Esophagus muscularis mucosa (tissue), 4 donors: ENCODE measurements at regions of chr17 and their contacts with region 1.

Region 1: GRCh38 chr17:76121932-76122430 is 18.4 kb upstream of the EXOC7 start:
- DNase-seq: no peak
- H3K4me3 ChIP-seq: peak overlapping the region; percentile 46 to 56 (median 50)
- H3K27ac ChIP-seq: peak overlapping the region in 2 of 4 donors; percentile 37 to 45
- H3K4me1 ChIP-seq: peaks cover 9 to 14% (median 12%) of the 10 kb centered on the region in 4 donors
- H3K27me3 ChIP-seq: no peaks in the 10 kb centered on the region
- CTCF ChIP-seq: no peak
- EP300 ChIP-seq: no peak
- POLR2A ChIP-seq: no peak

Region 2: GRCh38 chr17:76171706-76172105 is 49.7 kb after region 1 on chr17:
- intact Hi-C with region 1: no loop called
- DNase-seq: no peak
- H3K4me3 ChIP-seq: no peak overlapping the region
- H3K27ac ChIP-seq: no peak overlapping the region
- H3K4me1 ChIP-seq: no peaks in the 10 kb centered on the region
- H3K27me3 ChIP-seq: no peaks in the 10 kb centered on the region
- CTCF ChIP-seq: no peak
- EP300 ChIP-seq: no peak
- POLR2A ChIP-seq: no peak

Region 3: GRCh38 chr17:76182016-76182764 is 60.2 kb after region 1 on chr17:
- intact Hi-C with region 1: loop called (anchors 1 kb)
- DNase-seq: peak; percentile 98
- H3K4me3 ChIP-seq: no peak overlapping the region
- H3K27ac ChIP-seq: no peak overlapping the region
- H3K4me1 ChIP-seq: peaks cover 0 to 8% (median 6%) of the 10 kb centered on the region in 4 donors
- H3K27me3 ChIP-seq: no peaks in the 10 kb centered on the region
- CTCF ChIP-seq: peak; percentile 82 to 91 (median 90)
- EP300 ChIP-seq: no peak
- POLR2A ChIP-seq: no peak

Region 4: DNA sequence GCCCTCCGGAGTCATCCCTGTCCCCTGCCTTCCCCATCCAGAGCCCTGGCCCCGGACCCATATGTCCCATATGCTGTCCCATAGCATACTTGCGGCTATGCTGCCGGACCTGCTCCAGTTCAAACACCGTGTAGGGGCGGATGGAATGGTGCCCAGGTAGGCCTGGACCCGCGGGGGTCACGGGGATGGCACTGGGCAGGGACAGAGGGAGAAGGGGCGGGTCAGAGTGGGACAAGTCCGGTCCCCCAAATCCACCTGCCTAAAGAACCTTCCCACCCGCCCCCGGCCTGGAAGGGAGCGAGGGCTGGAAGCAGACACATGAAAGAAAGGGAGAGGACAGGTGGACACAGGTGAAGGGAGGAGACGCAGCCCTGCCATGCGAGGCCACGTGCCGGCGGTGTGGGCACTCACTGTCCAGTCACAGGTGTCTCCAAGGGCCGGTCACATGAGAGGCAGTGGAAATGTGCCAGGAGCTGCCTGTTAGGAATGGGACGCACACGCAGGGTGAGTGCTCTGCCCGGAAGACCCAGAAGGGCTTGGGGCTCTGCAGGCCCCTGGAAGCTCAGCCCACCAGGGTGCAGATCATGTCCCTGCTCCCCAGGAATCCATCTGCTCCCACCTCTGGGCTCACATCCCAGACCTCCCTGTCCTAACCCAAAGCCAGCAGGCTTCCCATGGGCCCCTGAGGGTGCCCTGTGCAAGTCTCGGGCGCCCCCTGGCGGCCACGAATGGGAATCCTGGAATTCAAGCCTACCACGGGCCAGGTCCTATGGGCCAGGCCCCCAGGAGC is 157.2 kb after region 1 on chr17:
- intact Hi-C with region 1: loop called (anchors 1 kb)
- DNase-seq: peak; percentile 96
- H3K4me3 ChIP-seq: no peak overlapping the region
- H3K27ac ChIP-seq: no peak overlapping the region
- H3K4me1 ChIP-seq: peaks cover 8 to 18% (median 13%) of the 10 kb centered on the region in 4 donors
- H3K27me3 ChIP-seq: no peaks in the 10 kb centered on the region
- CTCF ChIP-seq: peak; percentile 96 to 98 (median 97)
- EP300 ChIP-seq: no peak
- POLR2A ChIP-seq: no peak

Region 5: DNA sequence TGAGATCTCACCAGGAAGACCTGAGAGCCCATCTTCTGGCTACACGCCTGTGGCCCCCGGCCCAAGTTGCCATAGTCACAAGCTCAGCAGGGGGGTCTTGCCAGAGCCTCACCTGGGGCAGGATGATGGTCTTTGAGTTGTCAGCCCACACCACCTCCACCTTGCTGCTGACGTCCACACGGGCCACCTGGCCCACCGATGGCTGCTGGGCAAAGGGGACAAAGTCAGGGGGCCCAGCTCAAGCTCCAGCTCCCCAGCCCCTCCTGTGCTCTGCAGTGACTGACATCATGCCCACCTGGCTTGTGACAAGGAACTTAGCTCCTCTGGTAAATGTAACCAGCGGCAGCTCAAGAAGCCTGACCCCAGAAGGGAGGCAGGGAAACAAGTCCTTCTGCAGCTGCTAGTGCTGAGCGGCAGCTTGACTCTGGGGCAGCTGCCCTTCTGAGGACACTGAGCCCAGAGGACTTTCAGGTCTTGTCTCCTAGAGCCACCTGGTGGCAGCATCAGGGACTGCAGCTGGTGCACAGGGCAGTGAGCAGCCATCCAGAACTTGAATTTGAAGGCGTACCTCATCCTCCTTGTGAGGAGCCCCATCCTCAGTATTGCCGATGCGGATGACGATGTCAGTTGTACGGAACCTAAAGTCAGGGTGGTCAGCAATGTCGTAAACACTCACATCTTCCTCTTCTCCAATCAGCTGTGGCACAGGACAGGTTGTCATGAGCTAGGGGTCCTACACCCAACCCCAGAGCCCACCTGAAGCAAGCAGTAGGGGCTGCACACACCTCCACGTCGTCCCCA is 275.9 kb after region 1 on chr17:
- intact Hi-C with region 1: loop called (anchors 10 kb)
- DNase-seq: peak; percentile 97
- H3K4me3 ChIP-seq: no peak overlapping the region
- H3K27ac ChIP-seq: no peak overlapping the region
- H3K4me1 ChIP-seq: peaks cover 0 to 5% (median 4%) of the 10 kb centered on the region in 4 donors
- H3K27me3 ChIP-seq: no peaks in the 10 kb centered on the region
- CTCF ChIP-seq: peak; percentile 95 to 99 (median 98)
- EP300 ChIP-seq: no peak
- POLR2A ChIP-seq: no peak